Tibial artery (tissue), 4 donors: ENCODE measurements at regions of chr1 and their contacts with region 1.

Region 1: DNA sequence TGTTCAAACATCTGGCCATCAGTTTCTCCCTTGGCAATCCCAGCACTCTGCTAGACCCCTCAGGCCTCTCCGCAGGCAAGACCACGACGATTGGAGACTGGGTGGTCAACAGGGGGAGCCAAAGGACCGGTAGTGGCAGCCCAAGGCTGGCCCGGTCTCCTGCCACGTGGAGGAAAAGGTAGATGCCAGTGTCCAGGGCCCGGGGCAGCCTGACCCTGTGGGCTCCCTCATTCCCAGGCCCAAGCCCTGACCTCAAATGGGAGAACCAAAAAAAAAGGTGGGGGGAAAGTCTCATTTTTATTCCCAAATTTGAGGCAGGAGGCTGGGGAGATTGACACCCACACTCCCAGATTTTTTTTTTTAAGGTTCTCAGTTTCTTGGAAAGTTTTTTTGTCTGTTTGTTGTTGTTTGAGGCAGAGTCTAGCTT is 24.8 kb downstream of the S100A6 start:
- DNase-seq: peak; percentile 74 to 87
- H3K4me3 ChIP-seq: no peak overlapping the region
- H3K27ac ChIP-seq: peak overlapping the region in 1 of 2 donors; percentile 20
- H3K4me1 ChIP-seq: peaks cover 10 to 32% (median 24%) of the 10 kb centered on the region in 4 donors
- H3K27me3 ChIP-seq: no peaks in the 10 kb centered on the region
- CTCF ChIP-seq: peak; percentile 91 to 94

Region 2: DNA sequence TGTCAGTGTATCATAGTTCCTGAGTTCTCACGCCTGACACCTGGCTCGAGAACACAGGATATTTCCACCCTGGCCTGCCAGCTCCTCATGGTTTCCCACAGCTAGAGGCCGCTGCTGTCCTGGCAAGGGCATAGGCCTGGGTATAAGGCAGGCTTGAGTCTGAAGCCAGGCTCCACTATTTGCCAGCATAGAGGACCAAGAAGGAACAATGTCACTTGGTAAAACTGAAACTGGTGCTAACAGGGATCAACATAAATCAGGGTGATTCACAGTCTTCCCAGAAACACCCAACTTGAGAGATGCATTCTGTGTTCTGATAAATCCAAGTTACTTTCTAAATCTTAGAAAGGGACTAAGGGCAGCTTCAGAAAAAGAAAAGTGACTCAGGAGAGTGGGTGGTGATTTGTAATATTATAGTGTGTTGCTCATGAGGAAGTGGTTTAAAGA is 61.6 kb after region 1 on chr1:
- intact Hi-C with region 1: loop called (anchors 2 kb)
- DNase-seq: peak; percentile 90 to 93
- H3K4me3 ChIP-seq: no peak overlapping the region
- H3K27ac ChIP-seq: peak overlapping the region; percentile 54 to 65
- H3K4me1 ChIP-seq: peaks cover 5 to 36% (median 28%) of the 10 kb centered on the region in 4 donors
- H3K27me3 ChIP-seq: no peaks in the 10 kb centered on the region
- CTCF ChIP-seq: peak; percentile 78 to 90

Region 3: DNA sequence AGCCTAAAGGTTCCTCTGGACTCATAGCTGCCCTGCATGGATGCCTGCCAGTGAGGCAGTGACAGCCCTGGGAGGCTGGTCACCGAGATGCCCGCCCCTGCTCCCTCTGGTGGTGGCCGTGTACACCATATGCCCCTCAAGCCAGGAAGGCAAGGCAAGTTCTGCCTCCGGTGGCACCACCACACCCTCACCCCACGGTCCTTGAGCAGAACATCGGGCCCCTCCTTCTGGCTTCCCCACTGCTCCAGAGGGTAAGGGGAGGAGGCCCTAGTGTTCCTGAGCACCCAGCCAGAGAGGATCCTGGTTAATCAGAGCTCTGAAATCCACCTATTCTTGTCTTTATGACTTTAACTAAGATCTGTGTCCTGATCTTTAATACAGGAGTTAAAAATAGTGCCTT is 106.7 kb after region 1 on chr1:
- intact Hi-C with region 1: loop called (anchors 5 kb)
- DNase-seq: peak in 1 of 2 donors; percentile 88
- H3K4me3 ChIP-seq: no peak overlapping the region
- H3K27ac ChIP-seq: peak overlapping the region in 1 of 2 donors; percentile 37
- H3K4me1 ChIP-seq: peaks cover 0 to 17% (median 11%) of the 10 kb centered on the region in 4 donors
- H3K27me3 ChIP-seq: no peaks in the 10 kb centered on the region
- CTCF ChIP-seq: no peak

Region 4: GRCh38 chr1:153749408-153750005 is 238.5 kb after region 1 on chr1:
- intact Hi-C with region 1: loop called (anchors 10 kb)
- DNase-seq: peak; percentile 92 to 96
- H3K4me3 ChIP-seq: no peak overlapping the region
- H3K27ac ChIP-seq: peak overlapping the region; percentile 81 to 85
- H3K4me1 ChIP-seq: peaks cover 0 to 73% (median 33%) of the 10 kb centered on the region in 4 donors
- H3K27me3 ChIP-seq: no peaks in the 10 kb centered on the region
- CTCF ChIP-seq: peak; percentile 93 to 96